ENCODE measurements at regions of chr10 and their contacts with region 1.

Region 1: DNA sequence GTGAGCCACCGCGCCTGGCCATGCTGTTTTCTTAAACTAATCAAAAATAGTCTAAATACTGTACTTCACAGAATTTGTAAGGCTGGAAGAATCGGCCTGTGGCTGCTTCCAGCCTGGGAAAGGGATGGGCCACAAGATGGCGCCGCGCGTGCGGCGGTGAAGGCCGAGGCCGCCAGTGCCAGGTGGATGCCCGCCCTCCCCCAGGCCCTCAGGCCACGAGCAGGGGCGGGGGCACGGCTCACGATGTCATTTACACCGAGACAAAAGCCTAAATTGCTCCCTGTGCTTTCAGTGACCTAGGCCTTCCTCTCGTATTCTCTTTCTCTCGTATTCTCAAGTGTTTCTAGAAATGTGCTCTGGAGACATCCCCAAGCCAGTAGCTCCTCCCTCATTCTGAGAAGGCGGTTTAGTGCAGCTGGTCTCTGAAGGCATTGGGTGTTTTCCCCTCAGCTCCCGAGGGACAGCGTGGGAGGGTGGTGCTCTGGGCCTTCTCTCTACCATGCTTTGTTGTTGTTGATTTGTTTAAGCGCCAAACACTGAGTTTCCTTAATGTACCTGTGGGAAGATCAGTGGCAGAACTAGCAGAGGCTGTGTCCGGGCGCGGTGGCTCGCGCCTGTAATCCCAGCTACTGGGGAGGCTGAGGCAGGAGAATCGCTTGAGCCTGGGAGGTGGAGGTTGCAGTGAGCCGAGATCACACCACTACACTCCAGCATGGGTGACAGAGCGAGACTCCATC is 68.4 kb downstream of the CDC123 start:
- DNase-seq: peak; percentile 87

Region 2: GRCh38 chr10:12656518-12657142 is 392.3 kb after region 1 on chr10:
- in situ Hi-C with region 1: loop called (anchors 25 kb)
- DNase-seq: peak; percentile 71

Measured in KBM-7 (cell line).